ENCODE measurements at regions of chr12 and their contacts with region 1.

Region 1: DNA sequence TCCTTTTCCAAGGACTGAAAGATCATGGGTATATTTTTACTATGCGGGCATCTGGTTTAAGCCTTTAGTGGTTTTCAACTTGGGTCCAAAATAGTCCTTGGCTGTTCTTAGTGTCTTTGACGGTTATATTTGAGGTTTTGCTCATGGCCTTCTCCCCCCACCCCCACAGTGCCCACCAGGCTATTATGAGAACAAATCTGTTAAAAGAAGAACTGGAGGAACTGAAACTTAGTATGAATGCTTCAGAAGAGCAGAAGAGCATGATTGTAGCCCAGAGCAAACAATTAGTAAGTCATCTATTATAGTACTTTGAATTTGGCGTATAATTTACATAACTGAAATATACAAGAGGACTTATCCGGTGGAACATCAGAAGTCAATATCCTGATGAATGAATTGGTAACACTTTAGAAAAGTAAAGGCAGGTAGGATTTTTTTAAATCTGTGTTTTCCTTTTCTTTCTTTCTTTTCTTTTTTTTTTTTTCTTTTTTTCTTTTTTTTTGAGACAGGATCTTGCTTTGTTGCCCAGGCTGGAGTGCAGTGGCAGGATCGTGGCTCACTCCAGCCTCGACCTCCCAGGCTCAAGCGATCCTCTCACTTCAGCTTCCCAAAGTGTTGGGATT is 71.8 kb upstream of the BCAT1 start:
- DNase-seq: peak; percentile 68
- CTCF ChIP-seq: no peak

Region 2: GRCh38 chr12:24966951-24967564 is 53.7 kb before region 1 on chr12:
- CTCF ChIA-PET with region 1: no interaction called
- POLR2A ChIA-PET with region 1: no interaction called
- DNase-seq: no peak
- CTCF ChIP-seq: no peak

Region 3: DNA sequence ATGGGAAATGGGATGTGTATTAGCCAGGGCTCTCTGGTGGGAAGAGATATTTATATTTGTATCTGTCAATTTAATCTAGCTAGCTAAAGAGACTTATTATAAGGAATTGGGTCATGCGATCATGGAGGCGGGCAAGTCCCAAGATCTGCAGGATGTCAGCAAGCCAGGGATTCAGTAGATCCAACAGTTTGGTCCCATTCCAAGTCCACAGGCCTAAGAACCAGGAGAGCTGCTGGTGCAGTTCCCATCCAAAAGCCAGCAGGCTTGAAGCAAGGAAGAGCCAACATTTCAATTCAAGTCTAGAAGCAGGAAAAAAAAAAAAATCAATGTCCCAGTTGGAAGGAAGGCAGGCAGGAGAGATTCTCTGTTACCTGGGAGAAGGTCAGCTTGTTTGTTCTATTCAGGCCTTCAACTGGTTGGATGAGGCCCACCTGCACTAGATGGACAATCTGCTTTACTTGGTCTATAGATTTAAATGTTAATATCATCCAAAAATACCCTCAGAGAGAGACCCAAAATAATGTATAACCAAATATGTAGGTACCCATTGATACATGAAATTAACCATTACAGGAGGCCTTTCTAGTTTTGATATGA is 11.1 kb before region 1 on chr12:
- CTCF ChIA-PET with region 1: interaction called, 10 read pairs
- POLR2A ChIA-PET with region 1: no interaction called
- DNase-seq: no peak
- CTCF ChIP-seq: no peak

Region 4: GRCh38 chr12:25041006-25041741 is 20.4 kb after region 1 on chr12:
- CTCF ChIA-PET with region 1: interaction called, 21 read pairs
- POLR2A ChIA-PET with region 1: no interaction called
- DNase-seq: no peak
- CTCF ChIP-seq: no peak

Region 5: GRCh38 chr12:25052196-25052913 is 31.6 kb after region 1 on chr12:
- CTCF ChIA-PET with region 1: interaction called, 13 read pairs
- POLR2A ChIA-PET with region 1: no interaction called
- DNase-seq: peak; percentile 60
- CTCF ChIP-seq: no peak

Measured in GM10248 (cell line).